Activated CD8-positive, alpha-beta T cell treated with anti-CD3 and anti-CD28 coated beads, Interleukin-2, amount 10 ng/mL, durations not matched to agents 7 days and 5 days (primary cell): ENCODE measurements at regions of chr18 and their contacts with region 1.

Region 1: DNA sequence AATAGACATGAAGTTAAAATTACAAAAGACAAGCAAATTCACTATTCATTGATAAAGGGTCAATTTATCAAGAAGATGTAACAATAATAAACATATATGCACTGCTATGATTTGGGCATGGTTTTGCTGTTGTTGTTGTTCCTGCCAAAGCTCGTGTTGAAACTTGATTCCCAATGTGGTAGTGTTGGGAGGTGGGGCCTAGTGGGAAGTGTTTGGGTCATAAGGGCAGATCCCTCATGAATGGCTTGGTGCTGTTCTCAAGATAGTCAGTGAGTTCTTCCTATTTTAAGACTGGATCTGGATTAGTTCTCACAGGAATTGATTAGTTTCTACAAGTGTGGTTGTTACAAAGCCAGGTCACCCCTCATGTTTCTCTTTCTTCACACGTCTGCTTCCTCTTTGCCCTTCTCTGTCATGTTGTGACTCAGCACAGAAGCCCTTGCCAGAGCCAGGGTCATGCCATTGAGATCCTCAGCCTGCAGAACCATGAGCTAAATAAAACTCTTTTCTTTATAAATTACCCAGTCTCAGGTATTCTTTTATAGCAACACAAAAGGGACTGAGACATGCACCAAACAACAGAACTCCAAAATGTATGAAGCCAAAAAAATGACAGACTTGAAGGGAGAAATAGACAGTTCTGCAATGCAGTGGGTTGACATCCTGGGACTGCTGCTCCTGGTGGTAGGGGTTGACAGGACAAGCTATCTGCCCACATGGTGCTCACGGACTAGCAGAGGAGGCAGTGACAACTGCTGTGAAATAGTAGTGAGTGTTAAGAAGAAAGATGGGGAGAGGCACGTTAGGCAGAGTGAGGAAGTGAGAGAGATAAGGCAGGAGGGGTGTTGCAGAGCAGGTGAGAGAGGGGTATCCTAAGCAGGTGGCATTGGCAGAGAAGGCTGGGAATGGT is 18.6 kb upstream of the SKA1 start:
- DNase-seq: peak; percentile 28
- ATAC-seq: no peak
- H3K4me3 Mint-ChIP-seq: no peak overlapping the region
- H3K27ac Mint-ChIP-seq: peak overlapping the region; percentile 51
- H3K4me1 Mint-ChIP-seq: peaks cover 17% of the 10 kb centered on the region
- H3K27me3 Mint-ChIP-seq: peaks cover 38% of the 10 kb centered on the region

Region 2: DNA sequence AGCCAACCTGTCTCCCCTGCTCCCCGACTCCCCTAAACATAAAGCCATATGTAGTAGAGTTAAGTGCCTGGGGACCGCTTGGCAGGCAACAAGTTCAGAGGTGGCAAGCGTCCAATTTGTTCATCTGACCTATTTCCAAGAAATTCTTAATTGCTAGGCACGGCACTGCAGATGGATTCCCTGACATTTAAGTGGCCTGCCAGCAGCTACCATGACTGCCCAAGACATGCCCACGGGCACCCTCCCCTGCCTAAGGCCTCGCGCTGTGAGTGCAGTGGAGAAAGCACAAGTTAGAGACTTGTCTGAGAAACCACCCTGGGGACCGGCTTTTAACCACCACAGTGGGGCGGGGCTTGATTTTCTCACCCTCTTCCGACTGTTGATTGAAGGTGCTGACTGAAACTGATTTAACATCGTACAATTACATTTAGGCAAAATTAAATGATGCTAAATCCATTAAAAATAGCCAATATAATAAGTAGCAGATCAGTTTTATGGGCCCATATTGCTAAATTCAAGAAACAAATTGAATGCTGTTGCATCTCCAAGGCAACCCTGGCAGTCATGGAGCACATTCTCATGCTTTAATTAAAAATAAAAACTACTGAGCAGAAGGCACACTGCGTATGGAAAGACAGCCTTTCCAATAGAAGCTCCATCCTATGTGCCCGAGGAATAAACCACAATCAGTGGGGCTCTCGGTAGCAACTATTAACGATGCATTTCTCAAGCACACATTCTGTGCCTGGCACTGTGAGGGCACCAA is 379.3 kb before region 1 on chr18:
- CTCF ChIA-PET with region 1: no interaction called
- POLR2A ChIA-PET with region 1: no interaction called
- DNase-seq: no peak
- ATAC-seq: no peak
- H3K4me3 Mint-ChIP-seq: no peak overlapping the region
- H3K27ac Mint-ChIP-seq: no peak overlapping the region
- H3K4me1 Mint-ChIP-seq: no peaks in the 10 kb centered on the region
- H3K27me3 Mint-ChIP-seq: peaks cover 8% of the 10 kb centered on the region

Region 3: DNA sequence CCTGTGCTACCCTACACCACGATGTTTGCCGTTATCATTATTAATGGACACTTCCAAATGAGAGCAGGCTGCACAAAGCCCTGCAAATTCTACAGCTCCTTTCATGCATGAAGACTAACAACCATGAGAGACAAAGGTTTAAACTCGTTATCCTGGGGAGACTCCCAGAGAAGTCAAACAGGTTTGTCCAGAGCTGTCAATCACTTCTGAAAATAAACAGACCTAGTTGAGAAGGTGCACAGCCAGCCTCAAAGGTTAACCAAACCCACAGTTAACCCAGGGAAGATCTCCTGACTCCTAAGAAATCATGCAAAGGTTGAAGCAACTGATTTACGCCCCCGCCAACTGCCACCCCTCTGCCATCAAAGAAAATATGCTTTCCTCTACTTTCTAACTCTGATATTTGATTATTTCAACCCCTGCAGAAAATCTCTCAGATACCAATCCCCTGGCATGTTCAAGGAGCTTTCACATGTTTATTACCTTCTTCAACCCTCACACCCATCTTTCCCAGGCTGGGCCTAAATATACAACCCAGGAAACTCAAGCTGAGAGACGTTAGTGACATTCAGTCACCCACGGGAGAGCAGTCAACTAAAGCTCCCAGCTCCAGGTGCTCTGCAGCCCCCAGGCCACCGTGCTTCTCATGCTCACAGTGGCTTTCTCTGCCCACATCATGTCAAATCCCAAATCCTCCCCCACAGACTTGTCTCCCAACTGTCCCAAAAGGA is 197.2 kb before region 1 on chr18:
- CTCF ChIA-PET with region 1: no interaction called
- POLR2A ChIA-PET with region 1: no interaction called
- DNase-seq: no peak
- ATAC-seq: no peak
- H3K4me3 Mint-ChIP-seq: no peak overlapping the region
- H3K27ac Mint-ChIP-seq: no peak overlapping the region
- H3K4me1 Mint-ChIP-seq: no peaks in the 10 kb centered on the region
- H3K27me3 Mint-ChIP-seq: peaks cover 32% of the 10 kb centered on the region

Region 4: DNA sequence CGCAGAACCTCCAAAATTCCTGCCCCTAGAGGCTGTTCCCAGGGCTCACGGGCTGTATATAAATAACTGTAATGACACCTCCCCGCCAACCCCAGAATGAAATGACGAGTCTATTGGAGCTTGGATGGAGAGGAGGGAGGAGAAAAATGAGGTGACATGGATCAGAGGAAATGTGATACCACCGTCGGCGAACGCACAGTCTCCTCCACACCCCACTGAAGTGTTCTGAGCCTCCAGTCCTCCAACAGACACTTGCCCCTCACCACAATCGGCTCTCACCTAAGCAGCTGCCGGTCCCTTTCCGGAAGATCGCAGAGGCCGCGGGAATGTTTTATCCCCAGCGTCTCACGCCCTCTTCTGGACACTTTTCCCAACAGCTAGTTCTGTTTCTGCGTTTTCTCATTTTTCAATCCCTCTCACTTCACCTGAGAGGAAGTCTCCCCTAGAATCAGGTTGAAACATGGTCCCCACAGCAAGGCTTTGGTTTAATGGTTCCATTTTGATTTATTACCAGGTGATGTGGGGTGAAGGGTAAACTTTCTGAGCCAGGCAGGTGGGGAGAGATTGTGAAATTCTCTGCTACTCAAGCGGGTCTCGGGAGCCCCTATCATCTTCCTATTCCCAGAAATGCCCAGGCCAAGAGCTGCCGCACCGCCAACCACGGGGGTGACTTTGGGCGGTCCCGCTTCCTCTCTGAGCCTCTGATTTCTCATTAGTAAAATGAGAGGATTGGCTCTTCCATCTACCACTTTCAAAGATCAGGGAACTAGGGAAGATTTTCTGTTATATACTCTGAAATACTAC is 152.3 kb before region 1 on chr18:
- CTCF ChIA-PET with region 1: interaction called, 33 read pairs
- POLR2A ChIA-PET with region 1: no interaction called
- DNase-seq: peak; percentile 32
- ATAC-seq: no peak
- H3K4me3 Mint-ChIP-seq: no peak overlapping the region
- H3K27ac Mint-ChIP-seq: no peak overlapping the region
- H3K4me1 Mint-ChIP-seq: peaks cover 9% of the 10 kb centered on the region
- H3K27me3 Mint-ChIP-seq: peaks cover 58% of the 10 kb centered on the region

Region 5: DNA sequence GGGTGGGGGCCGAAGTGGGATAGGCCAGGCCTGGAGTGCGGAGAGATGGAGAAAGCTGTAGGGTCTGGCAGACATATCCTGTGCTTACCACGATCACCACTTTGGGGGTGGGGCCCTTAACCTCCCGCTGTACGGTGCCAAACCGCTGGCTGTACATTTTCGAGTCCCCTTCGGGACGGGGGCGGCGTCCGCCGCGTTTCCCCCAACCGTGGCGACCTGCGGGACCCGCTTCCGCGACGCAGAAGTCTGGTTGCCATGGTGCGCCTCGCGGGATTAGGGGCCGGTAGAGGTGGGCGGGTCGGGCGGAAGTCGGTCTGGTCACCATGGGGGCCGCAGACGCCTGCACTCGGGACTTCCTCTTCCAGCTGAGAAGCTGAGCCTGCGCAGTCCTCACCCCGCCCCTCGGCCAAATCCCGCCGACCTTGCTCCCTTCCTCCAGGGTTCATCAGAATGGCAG is 90.0 kb before region 1 on chr18 and contains the start of gene CFAP53:
- CTCF ChIA-PET with region 1: interaction called, 60 read pairs
- POLR2A ChIA-PET with region 1: interaction called, 3 read pairs
- DNase-seq: peak; percentile 94
- ATAC-seq: peak; percentile 86
- H3K4me3 Mint-ChIP-seq: peak within 1 kb of the TSS; percentile 76
- H3K27ac Mint-ChIP-seq: peak within 1 kb of the TSS; percentile 76
- H3K4me1 Mint-ChIP-seq: peaks cover 34% of the 10 kb centered on the region
- H3K27me3 Mint-ChIP-seq: no peaks in the 10 kb centered on the region
- total RNA-seq, gene CFAP53: 0.21 to 0.29 TPM

Region 6: DNA sequence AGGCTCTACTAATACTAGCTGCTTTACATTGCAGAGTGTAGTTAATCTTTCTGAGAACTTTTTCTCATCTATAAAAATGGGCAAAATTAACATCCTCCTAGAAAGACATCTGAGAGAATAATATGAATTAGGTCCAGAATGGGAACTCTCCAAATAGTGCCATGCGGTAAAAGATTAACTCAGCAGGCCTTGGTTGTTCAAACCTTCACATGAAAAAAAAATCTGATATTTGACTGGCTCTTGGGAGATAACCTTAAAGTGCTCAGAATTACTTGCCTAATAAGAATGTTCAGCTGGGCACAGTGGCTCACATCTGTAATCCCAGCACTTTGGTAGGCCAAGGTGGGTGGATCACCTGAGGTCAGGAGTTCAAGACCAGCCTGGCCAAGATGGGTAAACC is 63.3 kb before region 1 on chr18:
- CTCF ChIA-PET with region 1: interaction called, 25 read pairs
- POLR2A ChIA-PET with region 1: no interaction called
- DNase-seq: no peak
- ATAC-seq: no peak
- H3K4me3 Mint-ChIP-seq: no peak overlapping the region
- H3K27ac Mint-ChIP-seq: no peak overlapping the region
- H3K4me1 Mint-ChIP-seq: peaks cover 25% of the 10 kb centered on the region
- H3K27me3 Mint-ChIP-seq: peaks cover 10% of the 10 kb centered on the region

Region 7: GRCh38 chr18:50331691-50332090 is 24.6 kb before region 1 on chr18:
- CTCF ChIA-PET with region 1: interaction called, 11 read pairs
- POLR2A ChIA-PET with region 1: no interaction called
- DNase-seq: no peak
- ATAC-seq: no peak
- H3K4me3 Mint-ChIP-seq: no peak overlapping the region
- H3K27ac Mint-ChIP-seq: no peak overlapping the region
- H3K4me1 Mint-ChIP-seq: no peaks in the 10 kb centered on the region
- H3K27me3 Mint-ChIP-seq: peaks cover 24% of the 10 kb centered on the region

Region 8: DNA sequence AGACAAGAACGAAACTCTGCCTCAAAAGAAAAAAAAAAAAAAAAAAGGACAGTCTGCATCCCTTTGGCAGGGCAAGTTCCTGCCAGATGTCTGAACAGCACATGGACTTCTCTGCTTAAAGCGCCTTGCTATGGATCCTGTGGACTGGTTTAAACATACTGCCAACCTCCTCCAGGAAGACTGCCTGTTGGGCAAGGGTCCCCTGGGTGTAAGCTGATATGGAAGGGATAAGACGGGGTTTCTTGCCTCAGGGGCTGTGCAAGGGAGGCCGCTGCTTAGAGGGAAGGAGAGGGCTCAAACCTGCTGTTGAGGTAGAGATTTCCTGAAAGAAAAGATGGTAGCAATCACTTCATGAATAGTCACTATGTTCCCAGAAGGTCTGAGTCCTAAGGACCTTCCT is 40.7 kb after region 1 on chr18:
- CTCF ChIA-PET with region 1: interaction called, 14 read pairs
- POLR2A ChIA-PET with region 1: no interaction called
- DNase-seq: no peak
- ATAC-seq: no peak
- H3K4me3 Mint-ChIP-seq: no peak overlapping the region
- H3K27ac Mint-ChIP-seq: no peak overlapping the region
- H3K4me1 Mint-ChIP-seq: no peaks in the 10 kb centered on the region
- H3K27me3 Mint-ChIP-seq: peaks cover 27% of the 10 kb centered on the region